Right cardiac atrium (tissue), 5 donors: ENCODE measurements at regions of chr5 and their contacts with region 1.

Region 1: DNA sequence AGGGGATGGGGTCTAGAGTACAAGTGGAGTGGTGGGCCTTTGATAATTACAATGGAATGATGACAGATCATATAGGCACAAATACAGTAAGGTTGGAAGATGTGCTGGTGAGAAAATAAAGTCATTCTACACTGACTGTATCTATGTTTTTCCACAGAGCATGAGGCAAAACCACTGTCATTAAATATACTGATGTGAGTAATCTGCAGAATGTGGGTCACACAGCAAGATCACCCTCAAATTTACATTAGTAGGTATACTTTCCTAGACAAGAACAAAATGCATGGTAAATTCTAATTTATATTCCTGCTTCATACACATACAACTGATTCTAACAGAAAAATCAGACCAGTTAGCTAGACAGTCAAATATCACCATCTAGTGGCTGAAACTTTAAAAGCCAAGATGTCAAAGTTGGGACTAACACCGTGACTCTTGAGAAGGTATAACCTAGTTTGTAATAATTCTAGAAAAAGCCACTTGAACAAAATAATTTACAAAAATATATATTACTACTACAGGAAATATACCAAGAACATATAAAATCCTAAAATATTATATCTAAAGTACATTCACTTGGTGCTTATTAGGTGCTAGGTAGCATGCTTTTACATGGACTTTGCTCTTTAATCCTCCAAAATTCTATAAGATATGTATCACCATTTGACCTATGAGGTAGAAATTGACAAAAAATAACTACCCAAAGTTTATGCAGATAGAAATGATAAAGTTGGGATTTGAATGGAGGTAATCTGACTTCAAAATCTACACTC is 19.5 kb downstream of the TTC33 start:
- DNase-seq: no peak
- ATAC-seq: peak; percentile 37 to 45
- H3K4me3 ChIP-seq: no peak overlapping the region
- H3K27ac ChIP-seq: no peak overlapping the region
- H3K4me1 ChIP-seq: peaks cover 6% of the 10 kb centered on the region
- H3K27me3 ChIP-seq: no peaks in the 10 kb centered on the region

Region 2: DNA sequence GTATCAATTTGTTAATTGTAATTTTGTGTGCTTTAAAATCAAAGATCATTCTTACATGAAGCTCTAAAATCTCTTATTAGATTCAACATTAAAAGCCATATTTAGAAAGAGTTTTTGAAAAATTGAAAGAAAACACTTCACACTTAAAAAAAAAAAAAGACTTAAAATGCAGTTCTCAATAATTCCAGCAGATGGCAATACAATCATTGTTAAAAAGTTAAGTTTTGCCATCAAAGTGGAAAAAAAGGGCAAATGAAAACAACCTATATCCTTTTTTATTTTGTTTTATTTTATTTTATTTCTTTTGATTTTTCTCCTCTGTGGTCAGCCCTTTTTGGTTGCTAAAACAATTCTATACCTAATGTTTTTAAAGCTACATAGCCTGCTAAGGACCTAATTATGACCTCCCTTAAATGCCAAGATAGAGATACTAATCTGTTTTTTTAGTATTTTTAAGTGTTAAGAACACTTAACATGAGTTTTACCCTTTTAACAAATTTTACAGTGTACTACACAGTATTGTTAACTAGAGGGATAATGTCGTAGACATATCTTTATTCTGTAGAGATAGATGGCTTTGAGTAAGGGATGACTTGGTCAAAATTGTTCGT is 1157.3 kb before region 1 on chr5:
- intact Hi-C with region 1: loop called in 1 of 4 experiments (anchors 10 kb)
- DNase-seq: no peak
- ATAC-seq: no peak
- H3K4me3 ChIP-seq: no peak overlapping the region
- H3K27ac ChIP-seq: no peak overlapping the region
- H3K4me1 ChIP-seq: no peaks in the 10 kb centered on the region
- H3K27me3 ChIP-seq: no peaks in the 10 kb centered on the region

Region 3: GRCh38 chr5:40521925-40522324 is 214.4 kb before region 1 on chr5:
- intact Hi-C with region 1: no loop called
- DNase-seq: no peak
- ATAC-seq: peak in 1 of 2 donors; percentile 29
- H3K4me3 ChIP-seq: no peak overlapping the region
- H3K27ac ChIP-seq: no peak overlapping the region
- H3K4me1 ChIP-seq: no peaks in the 10 kb centered on the region
- H3K27me3 ChIP-seq: no peaks in the 10 kb centered on the region